Dorsolateral prefrontal cortex (tissue), 120 donors: ENCODE measurements at regions of chr3 and their contacts with region 1.

Region 1: DNA sequence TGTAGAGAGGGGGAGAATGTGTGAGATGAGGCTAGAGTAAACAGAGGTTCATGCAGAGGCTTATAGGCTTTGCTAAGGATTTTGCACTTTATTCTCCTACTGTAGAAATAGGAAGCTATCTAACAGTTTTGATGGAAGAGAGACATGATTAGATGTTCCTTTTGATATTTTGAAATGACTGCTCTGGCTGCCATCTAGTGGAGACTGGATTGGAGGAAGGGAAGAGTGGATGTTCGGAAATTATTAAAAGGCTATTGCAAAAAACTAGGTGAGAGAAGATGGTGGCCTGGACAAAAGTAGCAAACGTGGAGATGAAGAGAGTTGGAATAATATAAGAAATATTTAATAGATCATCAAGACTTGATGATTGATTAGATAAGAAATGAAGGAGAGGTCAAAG is 42.2 kb downstream of the SYN2 start:
- DNase-seq: peak in 1 of 10 donors; percentile 29
- H3K4me3 ChIP-seq: no peak overlapping the region
- H3K27ac ChIP-seq: peak overlapping the region in 3 of 59 donors; percentile 8 to 25 (median 21)
- H3K27me3 ChIP-seq: peaks cover 0 to 6% (median 0%) of the 10 kb centered on the region in 45 donors
- CTCF ChIP-seq: peak; percentile 14 to 70 (median 52)

Region 2: DNA sequence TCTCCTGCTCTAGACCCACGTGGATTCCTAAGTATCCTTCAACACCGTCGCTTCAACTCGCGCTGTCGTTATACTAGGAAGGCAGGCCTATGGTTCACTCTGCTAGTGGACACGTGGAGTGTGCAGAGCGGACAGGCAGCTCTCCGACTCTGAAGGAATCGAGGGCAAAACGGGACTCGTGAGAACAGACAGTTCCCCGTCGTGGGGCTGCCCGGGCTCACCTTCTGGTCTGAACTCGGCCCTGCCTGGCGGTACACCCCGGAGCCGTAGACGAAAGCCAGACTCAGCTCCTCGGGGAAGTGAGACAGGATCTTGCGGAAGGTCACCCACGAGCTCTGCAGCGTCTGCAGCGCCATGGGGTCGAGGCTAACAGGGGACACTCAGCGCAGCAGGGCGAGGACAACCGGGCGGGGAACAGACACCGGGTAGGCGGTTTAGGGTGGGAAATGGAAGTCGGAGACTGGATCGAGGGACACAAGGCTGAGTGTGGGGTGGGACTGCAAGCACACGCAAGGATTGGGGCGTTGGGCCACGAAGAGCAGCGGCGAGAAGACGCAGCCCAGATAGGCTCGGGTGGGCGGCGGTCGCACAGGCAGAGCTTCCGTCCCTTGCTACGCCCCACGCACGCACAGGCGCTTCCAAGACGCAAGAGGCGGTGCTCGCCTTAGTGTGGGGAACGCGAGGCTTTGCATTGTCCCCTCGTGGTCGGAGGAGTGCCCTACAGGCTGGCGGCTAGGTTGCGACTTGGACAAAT is 199.9 kb before region 1 on chr3 and contains the start of gene TAMM41:
- intact Hi-C with region 1: loop called (anchors 10 kb)
- DNase-seq: peak; percentile 80 to 96 (median 94)
- H3K4me3 ChIP-seq: peak within 1 kb of the TSS; percentile 64 to 97 (median 86)
- H3K27ac ChIP-seq: peak within 1 kb of the TSS in 58 of 59 donors; percentile 28 to 92 (median 85)
- H3K27me3 ChIP-seq: no peaks in the 10 kb centered on the region
- CTCF ChIP-seq: peak; percentile 57 to 97 (median 80)
- total RNA-seq, gene TAMM41: 19.6 to 60.4 (median 33.1) TPM

Region 3: DNA sequence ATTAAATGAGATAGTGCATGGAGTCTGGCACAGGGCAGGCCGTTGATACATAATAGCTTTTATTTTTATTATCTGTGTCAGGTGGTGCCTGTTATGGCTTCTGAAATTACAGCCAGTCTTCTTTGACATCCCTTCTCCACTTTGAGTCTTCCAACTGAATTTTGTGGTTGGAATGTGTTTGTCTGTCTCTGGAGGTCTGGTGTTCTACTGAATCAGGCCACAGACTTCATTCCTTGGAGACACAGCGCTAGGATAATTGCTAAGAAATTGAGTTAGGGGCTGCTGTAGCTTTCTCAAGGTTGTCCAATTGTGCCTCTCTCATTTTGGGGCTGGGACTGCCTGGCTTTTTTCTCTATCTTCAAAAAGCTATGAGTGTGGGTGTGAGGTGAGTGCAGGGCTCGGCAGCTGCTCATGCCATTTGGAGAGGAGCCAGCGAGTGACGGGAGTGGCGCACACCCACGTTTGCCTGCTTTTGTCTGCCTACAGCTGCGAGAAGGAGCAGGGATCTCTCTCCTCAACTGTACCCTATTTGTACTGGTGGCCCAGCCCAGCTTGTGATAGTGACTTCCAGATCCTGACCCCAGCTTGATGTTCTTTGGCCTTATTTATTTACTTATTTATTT is 92.0 kb before region 1 on chr3:
- intact Hi-C with region 1: loop called in 1 of 2 experiments (anchors 10 kb)
- DNase-seq: peak in 3 of 10 donors; percentile 36 to 62 (median 41)
- H3K4me3 ChIP-seq: no peak overlapping the region
- H3K27ac ChIP-seq: peak overlapping the region in 1 of 59 donors; percentile 0
- H3K27me3 ChIP-seq: no peaks in the 10 kb centered on the region
- CTCF ChIP-seq: no peak